Panc1 (cell line): ENCODE measurements at regions of chr5 and their contacts with region 1.

Region 1: DNA sequence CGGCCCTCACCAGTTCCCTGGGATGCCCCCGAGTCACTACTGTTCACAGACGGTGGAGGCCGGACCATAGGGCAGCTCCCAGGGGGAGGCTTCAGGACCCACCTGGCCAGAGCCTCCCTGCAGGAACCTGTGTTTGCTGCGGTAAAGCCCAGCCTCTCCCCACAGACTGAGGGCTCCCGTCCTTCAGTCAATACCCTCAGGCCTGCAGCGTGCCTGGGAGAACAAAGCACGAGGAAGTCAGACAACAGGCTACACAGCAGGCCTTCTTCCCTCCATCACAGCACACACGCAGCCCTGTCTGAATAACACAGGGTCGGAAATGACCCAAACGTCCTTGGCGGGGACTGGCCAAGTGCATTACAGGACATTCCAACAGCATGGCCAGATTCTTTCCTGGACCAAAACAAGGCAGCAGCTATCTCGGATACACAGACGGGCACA is 34.4 kb downstream of the COL23A1 start:
- DNase-seq: no peak
- ATAC-seq: no peak
- H3K4me3 ChIP-seq: no peak overlapping the region
- H3K27ac ChIP-seq: no peak overlapping the region
- H3K4me1 ChIP-seq: no peaks in the 10 kb centered on the region
- H3K27me3 ChIP-seq: peaks cover 2% of the 10 kb centered on the region; the same call in 1 of the 2 replicates
- CTCF ChIP-seq: no peak

Region 2: DNA sequence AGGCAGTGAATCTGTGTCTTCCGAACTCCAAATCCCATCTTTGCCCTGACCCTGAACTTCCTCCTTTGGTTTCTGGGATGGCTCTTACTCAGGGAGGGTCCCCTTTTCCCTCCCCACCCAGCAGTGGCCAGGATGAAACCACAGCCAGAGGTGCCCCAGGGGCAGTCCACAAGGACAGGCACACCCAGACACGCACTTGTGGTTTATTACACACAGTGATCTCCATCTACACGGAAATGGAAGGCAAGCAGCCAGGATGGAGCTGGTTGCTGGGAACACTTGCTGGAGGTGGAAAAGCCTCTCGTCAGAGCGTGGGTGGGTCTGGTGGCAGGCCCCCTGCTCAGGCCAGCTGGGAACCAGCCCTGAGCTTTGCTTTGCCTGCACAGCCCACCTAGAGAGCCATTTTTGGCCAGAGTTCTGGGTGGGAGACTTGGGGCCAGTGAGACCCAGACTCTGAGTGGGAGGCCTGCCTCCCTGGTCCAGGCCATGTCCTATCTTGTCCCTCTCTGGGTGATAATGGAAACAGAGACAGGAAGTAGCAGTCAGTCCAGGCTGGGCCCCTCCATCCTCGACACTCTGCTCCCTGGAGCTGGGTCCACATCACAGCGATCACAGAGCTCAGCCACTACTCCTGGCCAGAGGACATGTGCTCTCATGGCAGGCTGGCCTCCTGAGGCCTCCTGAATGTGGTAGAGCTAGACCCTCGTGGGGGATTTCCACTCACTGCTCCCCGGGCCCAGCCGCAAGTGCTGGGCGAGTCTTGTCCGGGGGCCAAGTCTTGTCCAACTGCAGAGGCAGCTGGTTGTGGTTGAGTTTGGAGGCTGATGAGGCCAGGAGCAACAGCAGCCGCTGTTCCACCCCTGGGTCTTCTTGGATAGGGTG is 318.1 kb before region 1 on chr5:
- CTCF ChIA-PET with region 1: interaction called, 10 read pairs
- POLR2A ChIA-PET with region 1: no interaction called
- in situ Hi-C with region 1: no loop called
- intact Hi-C with region 1: no loop called
- DNase-seq: no peak
- ATAC-seq: no peak
- H3K4me3 ChIP-seq: no peak overlapping the region
- H3K27ac ChIP-seq: no peak overlapping the region
- H3K4me1 ChIP-seq: peaks cover 10% of the 10 kb centered on the region
- H3K27me3 ChIP-seq: no peaks in the 10 kb centered on the region
- CTCF ChIP-seq: no peak

Region 3: DNA sequence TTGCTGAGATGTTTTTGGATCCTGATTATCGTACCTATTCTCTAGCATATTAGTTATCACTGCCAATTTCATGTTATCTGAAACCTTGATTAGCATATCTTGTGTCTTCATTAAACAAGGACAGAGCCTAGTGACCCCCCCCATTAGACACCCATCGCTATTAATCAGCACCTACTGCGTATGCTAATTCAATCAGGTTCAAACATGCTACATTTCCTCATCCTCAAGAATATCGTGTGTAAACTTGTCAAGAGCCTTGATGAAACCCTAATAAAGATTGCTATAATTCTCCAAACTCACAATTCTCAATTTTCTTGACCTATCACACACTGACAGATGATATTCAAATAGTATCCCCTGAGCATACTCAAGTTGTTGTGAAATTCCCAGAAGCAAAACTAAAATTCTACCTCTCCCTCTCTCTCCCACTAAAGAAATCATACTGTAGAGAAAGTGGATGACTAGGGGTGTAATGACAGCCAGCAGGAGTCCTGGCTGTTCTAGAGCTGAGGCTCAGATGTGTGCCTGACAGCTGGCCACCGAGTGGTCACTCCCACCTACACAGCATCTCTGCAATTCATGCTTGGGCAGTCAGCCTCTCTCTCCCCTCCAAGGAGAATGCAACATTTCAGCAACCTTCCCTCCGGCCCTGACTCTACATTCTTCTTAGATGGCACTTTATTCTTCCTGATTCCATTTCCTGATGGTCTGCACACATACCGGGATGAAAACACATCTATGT is 183.8 kb after region 1 on chr5:
- CTCF ChIA-PET with region 1: no interaction called
- POLR2A ChIA-PET with region 1: no interaction called
- in situ Hi-C with region 1: no loop called
- intact Hi-C with region 1: no loop called
- DNase-seq: no peak
- ATAC-seq: no peak
- H3K4me3 ChIP-seq: no peak overlapping the region
- H3K27ac ChIP-seq: no peak overlapping the region
- H3K4me1 ChIP-seq: no peaks in the 10 kb centered on the region
- H3K27me3 ChIP-seq: no peaks in the 10 kb centered on the region
- CTCF ChIP-seq: no peak